PC-9 (cell line): ENCODE measurements at regions of chr6 and their contacts with region 1.

Region 1: DNA sequence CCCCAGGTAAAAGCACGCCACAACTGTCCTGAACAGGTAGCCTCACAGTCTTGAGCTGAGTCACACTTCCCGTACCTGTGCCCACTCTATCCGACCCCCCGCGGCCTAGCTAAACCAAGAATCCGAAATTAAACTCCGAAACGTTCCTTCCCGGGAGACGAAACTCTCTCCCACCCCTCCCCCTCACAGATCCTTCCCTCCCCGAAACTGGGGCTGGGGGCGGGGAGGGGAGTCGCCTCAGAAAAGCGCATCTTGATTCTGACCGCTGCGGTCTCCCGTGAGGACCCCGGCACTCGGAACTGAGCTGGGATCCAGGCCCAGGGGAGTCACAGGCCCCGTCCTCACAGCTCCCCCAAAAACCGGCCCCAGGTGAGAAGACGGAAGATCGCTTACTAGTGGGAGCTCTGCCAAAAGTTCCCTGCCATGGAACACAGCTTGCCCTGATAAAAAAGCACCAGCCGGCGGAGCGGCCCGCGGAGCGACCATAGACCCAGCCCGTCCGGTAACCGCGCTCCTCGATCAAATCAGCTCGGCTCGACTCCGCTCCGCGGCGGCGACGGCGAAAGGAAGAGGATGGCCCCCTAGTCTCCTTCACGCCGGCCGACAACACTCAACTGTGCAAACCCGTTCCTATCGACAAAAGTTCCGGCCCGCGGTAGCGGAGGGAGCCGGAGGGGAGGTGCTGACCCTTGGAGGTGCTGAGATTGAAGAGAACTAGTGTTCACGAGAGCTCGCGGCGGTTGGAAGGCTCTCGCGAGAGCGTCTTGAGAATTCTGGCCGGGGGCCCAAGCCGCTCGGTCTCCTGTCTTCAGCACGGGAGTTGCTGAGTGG is at the start of gene CCNC:
- DNase-seq: peak; percentile 91 to 94
- H3K4me3 ChIP-seq: peak within 1 kb of the TSS; percentile 83
- H3K27ac ChIP-seq: peak within 1 kb of the TSS; percentile 97
- H3K4me1 ChIP-seq: peaks cover 19% of the 10 kb centered on the region
- H3K27me3 ChIP-seq: no peaks in the 10 kb centered on the region
- CTCF ChIP-seq: no peak
- total RNA-seq, gene CCNC: 62.2 and 83.7 TPM in 2 replicates

Region 2: GRCh38 chr6:98947351-98948292 is 620.7 kb before region 1 on chr6 and contains the start of gene FBXL4:
- CTCF ChIA-PET with region 1: interaction called, 19 read pairs
- POLR2A ChIA-PET with region 1: no interaction called
- intact Hi-C with region 1: no loop called
- DNase-seq: peak; percentile 67 to 82
- H3K4me3 ChIP-seq: peak within 1 kb of the TSS; percentile 97
- H3K27ac ChIP-seq: peak within 1 kb of the TSS; percentile 49
- H3K4me1 ChIP-seq: peaks cover 21% of the 10 kb centered on the region
- H3K27me3 ChIP-seq: no peaks in the 10 kb centered on the region
- CTCF ChIP-seq: no peak
- total RNA-seq, gene FBXL4: 13.9 and 15.1 TPM in 2 replicates

Region 3: DNA sequence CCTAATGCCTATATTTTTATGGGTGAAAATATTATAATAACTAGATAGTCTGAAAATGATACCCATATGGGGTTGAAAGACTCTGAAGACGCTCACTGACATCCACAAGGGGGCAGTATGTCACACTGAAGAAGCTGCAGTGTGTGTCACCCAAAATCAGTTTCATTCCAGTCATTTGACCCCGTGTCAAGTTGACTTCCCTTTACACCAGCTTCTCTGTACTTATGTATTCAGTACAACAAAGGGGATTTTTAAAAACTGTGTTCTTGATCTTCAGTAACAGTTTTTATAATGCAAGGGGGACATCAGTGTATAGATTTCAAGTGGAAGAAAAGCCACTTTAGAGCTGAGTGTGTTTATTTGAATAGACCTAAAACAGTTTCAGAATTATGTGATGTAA is 238.2 kb before region 1 on chr6:
- CTCF ChIA-PET with region 1: no interaction called
- POLR2A ChIA-PET with region 1: no interaction called
- intact Hi-C with region 1: loop called (anchors 10 kb)
- DNase-seq: peak; percentile 31 to 59
- H3K4me3 ChIP-seq: no peak overlapping the region
- H3K27ac ChIP-seq: no peak overlapping the region
- H3K4me1 ChIP-seq: no peaks in the 10 kb centered on the region
- H3K27me3 ChIP-seq: no peaks in the 10 kb centered on the region
- CTCF ChIP-seq: peak; percentile 89

Region 4: DNA sequence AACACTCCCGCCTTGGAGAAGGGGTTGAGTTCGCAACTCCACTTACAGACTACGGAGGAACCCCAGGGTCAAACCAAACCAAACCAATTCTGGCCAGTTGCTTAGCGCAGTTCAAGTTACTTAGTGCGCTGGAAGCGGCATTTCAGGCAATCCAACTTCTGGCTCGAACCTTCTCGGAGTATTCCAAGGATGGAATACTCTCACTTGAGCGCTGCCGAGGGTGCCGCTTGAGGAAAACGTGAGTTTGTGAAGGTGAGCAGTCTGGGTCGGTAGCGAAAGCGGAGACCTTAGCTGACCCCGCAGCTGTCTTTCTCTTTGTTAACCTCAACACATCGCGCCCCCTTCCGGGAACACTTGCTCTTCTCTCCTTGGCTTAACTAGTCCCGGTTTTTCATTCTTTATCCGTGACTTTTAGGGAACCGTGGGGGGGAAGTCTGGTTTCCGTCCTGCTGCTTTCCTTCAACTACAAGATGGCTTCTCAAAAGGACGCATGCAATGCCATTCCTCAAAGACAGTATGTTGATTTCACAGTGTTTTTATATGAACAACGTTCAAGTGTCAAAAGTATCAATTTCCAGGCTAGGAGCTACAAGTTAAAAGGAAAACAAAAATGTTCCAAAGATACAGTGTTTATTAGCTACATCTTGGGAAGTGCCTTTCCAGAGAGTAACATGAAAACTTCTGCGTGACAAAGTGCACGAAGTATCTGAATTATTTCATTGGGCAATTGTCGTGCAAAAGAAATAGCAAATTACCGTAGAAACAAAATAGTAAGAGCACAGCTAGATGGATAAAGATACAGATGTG is 142.5 kb before region 1 on chr6:
- CTCF ChIA-PET with region 1: no interaction called
- POLR2A ChIA-PET with region 1: interaction called, 5 read pairs
- intact Hi-C with region 1: loop called (anchors 5 kb)
- DNase-seq: peak; percentile 70 to 79
- H3K4me3 ChIP-seq: peak overlapping the region; percentile 88
- H3K27ac ChIP-seq: peak overlapping the region; percentile 94
- H3K4me1 ChIP-seq: peaks cover 31% of the 10 kb centered on the region
- H3K27me3 ChIP-seq: no peaks in the 10 kb centered on the region
- CTCF ChIP-seq: peak; percentile 66; the same call in 1 of the 2 replicates

Region 5: GRCh38 chr6:99520855-99521632 is 47.3 kb before region 1 on chr6:
- CTCF ChIA-PET with region 1: no interaction called
- POLR2A ChIA-PET with region 1: interaction called, 6 read pairs
- intact Hi-C with region 1: loop called (anchors 2 kb)
- DNase-seq: peak; percentile 73 to 82
- H3K4me3 ChIP-seq: peak overlapping the region; percentile 61
- H3K27ac ChIP-seq: peak overlapping the region; percentile 45
- H3K4me1 ChIP-seq: peaks cover 12% of the 10 kb centered on the region
- H3K27me3 ChIP-seq: no peaks in the 10 kb centered on the region
- CTCF ChIP-seq: peak; percentile 85

Region 6: DNA sequence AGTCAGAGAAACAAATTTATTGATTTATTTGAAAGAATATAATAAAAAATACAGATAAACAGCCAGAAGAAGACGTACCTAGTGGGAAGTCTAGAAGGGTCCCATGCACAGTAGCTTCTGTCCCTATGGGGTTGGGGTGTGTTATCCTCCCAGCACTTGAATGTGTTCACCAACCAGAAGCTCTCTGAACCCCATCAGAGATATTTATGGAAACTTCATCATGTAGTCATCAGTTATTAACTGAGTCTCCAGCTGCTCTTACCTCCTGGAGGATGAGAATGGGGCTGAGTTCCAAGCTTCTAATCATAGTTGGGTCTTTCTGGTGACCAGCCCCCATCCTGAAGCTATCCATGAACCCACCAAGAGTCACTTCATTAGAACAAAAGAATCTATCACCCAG is 37.7 kb before region 1 on chr6:
- CTCF ChIA-PET with region 1: no interaction called
- POLR2A ChIA-PET with region 1: interaction called, 26 read pairs
- intact Hi-C with region 1: no loop called
- DNase-seq: no peak
- H3K4me3 ChIP-seq: no peak overlapping the region
- H3K27ac ChIP-seq: no peak overlapping the region
- H3K4me1 ChIP-seq: no peaks in the 10 kb centered on the region
- H3K27me3 ChIP-seq: no peaks in the 10 kb centered on the region
- CTCF ChIP-seq: no peak

Region 7: DNA sequence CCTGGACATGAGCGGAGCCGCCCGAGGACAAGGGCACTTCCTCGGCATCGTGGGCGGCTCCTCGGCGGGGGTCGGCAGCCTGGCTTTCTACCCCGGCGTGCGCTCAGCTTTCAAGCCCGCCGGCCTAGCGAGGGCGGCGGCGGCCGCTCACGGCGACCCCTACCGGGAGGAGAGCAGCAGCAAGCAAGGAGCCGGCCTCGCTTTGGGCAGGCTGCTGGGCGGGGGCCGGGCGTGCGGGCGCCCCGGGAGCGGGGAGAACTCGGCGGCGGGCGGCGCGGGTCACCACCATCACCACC is 45.0 kb after region 1 on chr6:
- CTCF ChIA-PET with region 1: no interaction called
- POLR2A ChIA-PET with region 1: no interaction called
- intact Hi-C with region 1: no loop called
- DNase-seq: no peak
- H3K4me3 ChIP-seq: no peak overlapping the region
- H3K27ac ChIP-seq: no peak overlapping the region
- H3K4me1 ChIP-seq: no peaks in the 10 kb centered on the region
- H3K27me3 ChIP-seq: no peaks in the 10 kb centered on the region
- CTCF ChIP-seq: no peak

Region 8: DNA sequence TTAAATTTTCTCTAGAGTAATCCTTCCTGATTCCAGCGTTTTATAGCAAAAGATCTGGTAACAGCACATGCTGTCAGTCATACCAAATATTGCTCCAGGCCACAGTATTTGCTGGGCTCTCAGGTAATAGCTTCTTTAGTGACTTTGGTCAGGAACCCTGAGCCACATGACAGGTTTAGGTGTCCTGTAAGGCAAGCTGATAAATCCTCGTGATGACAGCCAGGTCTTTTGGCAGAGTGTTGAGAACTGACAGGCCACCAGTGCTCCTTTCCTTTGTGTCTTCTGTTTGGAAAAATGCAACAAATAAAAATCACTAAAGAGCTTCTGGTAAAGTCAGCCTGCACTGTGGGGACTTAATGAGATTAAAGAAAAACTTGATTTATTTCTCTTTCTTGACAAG is 73.0 kb after region 1 on chr6:
- CTCF ChIA-PET with region 1: no interaction called
- POLR2A ChIA-PET with region 1: no interaction called
- intact Hi-C with region 1: no loop called
- DNase-seq: no peak
- H3K4me3 ChIP-seq: no peak overlapping the region
- H3K27ac ChIP-seq: no peak overlapping the region
- H3K4me1 ChIP-seq: no peaks in the 10 kb centered on the region
- H3K27me3 ChIP-seq: no peaks in the 10 kb centered on the region
- CTCF ChIP-seq: no peak

Region 9: GRCh38 chr6:99746261-99746895 is 178.1 kb after region 1 on chr6:
- CTCF ChIA-PET with region 1: no interaction called
- POLR2A ChIA-PET with region 1: interaction called, 4 read pairs
- intact Hi-C with region 1: loop called (anchors 5 kb)
- DNase-seq: peak; percentile 47 to 59
- H3K4me3 ChIP-seq: no peak overlapping the region
- H3K27ac ChIP-seq: no peak overlapping the region
- H3K4me1 ChIP-seq: no peaks in the 10 kb centered on the region
- H3K27me3 ChIP-seq: no peaks in the 10 kb centered on the region
- CTCF ChIP-seq: peak; percentile 94

Region 10: DNA sequence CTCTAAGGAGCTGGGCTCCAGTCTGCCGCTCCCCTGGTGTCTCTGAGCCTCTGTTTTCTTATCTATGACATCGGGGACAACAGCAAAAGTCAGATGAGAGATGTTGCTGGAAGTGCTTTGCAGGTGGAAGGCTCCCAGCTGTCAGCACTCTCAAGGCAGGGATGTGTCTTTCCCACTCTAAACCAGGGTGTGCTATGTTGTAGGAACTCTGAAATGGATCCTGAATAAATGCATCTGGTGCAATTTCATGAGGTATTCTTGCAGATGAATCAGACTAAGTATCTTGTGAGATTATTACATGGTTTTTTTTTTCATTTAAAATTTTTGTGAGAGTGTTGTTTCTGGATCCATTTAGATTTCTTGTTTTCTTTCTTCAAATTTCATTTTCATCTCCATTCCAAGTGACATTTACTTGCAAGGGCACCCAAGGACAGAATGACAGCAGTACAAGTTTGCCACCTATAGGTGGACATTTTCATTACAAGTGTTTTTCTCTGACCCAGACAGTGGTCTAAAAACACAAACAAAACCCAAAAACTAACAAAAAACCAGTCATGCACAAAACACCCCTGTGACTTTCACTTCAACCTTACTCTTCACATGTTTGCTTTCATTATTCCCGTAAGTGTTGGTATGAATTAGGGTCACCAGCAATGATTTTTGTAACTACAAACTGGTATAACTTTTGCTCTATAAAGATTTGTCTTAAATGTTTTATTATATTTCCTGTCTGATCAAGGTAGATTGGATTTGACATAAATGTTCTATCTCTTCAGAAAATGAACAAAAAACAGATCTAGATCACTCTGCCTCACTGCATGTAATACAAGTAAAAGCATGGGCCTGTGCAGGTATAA is 911.1 kb after region 1 on chr6:
- CTCF ChIA-PET with region 1: no interaction called
- POLR2A ChIA-PET with region 1: no interaction called
- intact Hi-C with region 1: no loop called
- DNase-seq: no peak
- H3K4me3 ChIP-seq: no peak overlapping the region
- H3K27ac ChIP-seq: no peak overlapping the region
- H3K4me1 ChIP-seq: no peaks in the 10 kb centered on the region
- H3K27me3 ChIP-seq: no peaks in the 10 kb centered on the region
- CTCF ChIP-seq: peak; percentile 83